IMR-90 (cell line): ENCODE measurements at regions of chr4 and their contacts with region 1.

Region 1: GRCh38 chr4:131644619-131645018 is 1504.5 kb upstream of the PCDH10 start:
- DNase-seq: peak; percentile 2
- ATAC-seq: peak; percentile 60; the same call in 1 of the 2 replicates
- H3K4me3 ChIP-seq: no peak overlapping the region
- H3K27ac ChIP-seq: no peak overlapping the region
- H3K4me1 ChIP-seq: no peaks in the 10 kb centered on the region
- H3K27me3 ChIP-seq: no peaks in the 10 kb centered on the region
- CTCF ChIP-seq: peak; percentile 37
- POLR2A ChIP-seq: no peak
- RAD21 ChIP-seq: peak; percentile 44

Region 2: DNA sequence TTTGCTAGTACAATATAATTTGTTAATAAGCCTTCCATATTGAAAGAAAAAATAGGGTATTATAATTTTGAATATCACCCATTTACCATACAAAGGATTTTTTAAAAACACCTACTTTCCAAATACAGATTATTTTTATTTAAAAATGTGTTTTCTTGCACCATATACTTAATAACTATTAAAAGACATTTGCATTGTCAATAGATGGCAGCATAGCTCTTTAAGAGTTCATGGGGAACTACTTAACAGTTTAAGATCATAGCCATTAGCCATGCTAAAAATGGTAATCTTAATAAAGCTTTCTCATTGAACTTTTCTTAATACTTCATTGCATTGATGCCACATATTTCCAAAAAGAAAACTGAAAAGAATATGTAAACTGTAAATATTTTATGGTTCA is 552.7 kb before region 1 on chr4:
- CTCF ChIA-PET with region 1: no interaction called
- POLR2A ChIA-PET with region 1: no interaction called
- dilution Hi-C with region 1: no loop called
- in situ Hi-C with region 1: no loop called
- intact Hi-C with region 1: loop called (anchors 10 kb)
- DNase-seq: peak; percentile 4
- ATAC-seq: no peak
- H3K4me3 ChIP-seq: no peak overlapping the region
- H3K27ac ChIP-seq: no peak overlapping the region
- H3K4me1 ChIP-seq: no peaks in the 10 kb centered on the region
- H3K27me3 ChIP-seq: no peaks in the 10 kb centered on the region
- CTCF ChIP-seq: peak; percentile 34; the same call in 1 of the 2 replicates
- POLR2A ChIP-seq: no peak
- RAD21 ChIP-seq: peak; percentile 45; the same call in 1 of the 2 replicates

Region 3: GRCh38 chr4:131603705-131604104 is 40.9 kb before region 1 on chr4:
- CTCF ChIA-PET with region 1: no interaction called
- POLR2A ChIA-PET with region 1: no interaction called
- dilution Hi-C with region 1: no loop called
- in situ Hi-C with region 1: no loop called
- intact Hi-C with region 1: no loop called
- DNase-seq: no peak
- ATAC-seq: no peak
- H3K4me3 ChIP-seq: no peak overlapping the region
- H3K27ac ChIP-seq: no peak overlapping the region
- H3K4me1 ChIP-seq: no peaks in the 10 kb centered on the region
- H3K27me3 ChIP-seq: no peaks in the 10 kb centered on the region
- CTCF ChIP-seq: no peak
- POLR2A ChIP-seq: no peak
- RAD21 ChIP-seq: no peak

Region 4: GRCh38 chr4:131613824-131614216 is 30.8 kb before region 1 on chr4:
- CTCF ChIA-PET with region 1: no interaction called
- POLR2A ChIA-PET with region 1: no interaction called
- dilution Hi-C with region 1: no loop called
- in situ Hi-C with region 1: no loop called
- intact Hi-C with region 1: no loop called
- DNase-seq: peak; percentile 0
- ATAC-seq: no peak
- H3K4me3 ChIP-seq: no peak overlapping the region
- H3K27ac ChIP-seq: no peak overlapping the region
- H3K4me1 ChIP-seq: no peaks in the 10 kb centered on the region
- H3K27me3 ChIP-seq: no peaks in the 10 kb centered on the region
- CTCF ChIP-seq: no peak
- POLR2A ChIP-seq: no peak
- RAD21 ChIP-seq: no peak